ENCODE measurements at regions of chr16 and their contacts with region 1.

Region 1: DNA sequence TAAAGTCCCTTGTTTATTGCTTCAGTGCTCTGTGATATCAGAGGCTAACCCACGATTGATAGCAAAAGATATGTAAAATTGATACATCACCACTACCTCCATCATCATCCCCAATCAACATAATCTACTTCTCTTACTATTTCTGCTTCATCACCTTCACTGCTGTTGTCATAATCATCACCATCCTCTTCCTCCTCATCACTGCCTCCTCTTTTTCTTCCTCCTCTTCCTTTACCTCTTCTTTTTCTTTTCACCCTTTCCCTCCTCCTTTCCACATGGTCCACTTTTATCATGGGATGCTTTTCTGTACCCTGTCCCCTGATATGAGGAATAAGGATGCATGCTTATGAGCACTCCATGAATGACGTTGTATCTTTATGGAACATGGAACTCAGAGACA is 178.6 kb upstream of the ZKSCAN2 start:
- DNase-seq: no peak
- H3K4me3 ChIP-seq: no peak overlapping the region
- H3K27ac ChIP-seq: no peak overlapping the region
- H3K4me1 ChIP-seq: no peaks in the 10 kb centered on the region
- CTCF ChIP-seq: no peak

Region 2: GRCh38 chr16:25855818-25856217 is 419.6 kb after region 1 on chr16:
- CTCF ChIA-PET with region 1: no interaction called
- POLR2A ChIA-PET with region 1: no interaction called
- intact Hi-C with region 1: no loop called
- DNase-seq: no peak
- H3K4me3 ChIP-seq: no peak overlapping the region
- H3K27ac ChIP-seq: no peak overlapping the region
- H3K4me1 ChIP-seq: no peaks in the 10 kb centered on the region
- CTCF ChIP-seq: no peak

Region 3: GRCh38 chr16:26594666-26595065 is 1158.4 kb after region 1 on chr16:
- CTCF ChIA-PET with region 1: no interaction called
- POLR2A ChIA-PET with region 1: no interaction called
- intact Hi-C with region 1: loop called (anchors 5 kb)
- DNase-seq: no peak
- H3K4me3 ChIP-seq: no peak overlapping the region
- H3K27ac ChIP-seq: no peak overlapping the region
- H3K4me1 ChIP-seq: no peaks in the 10 kb centered on the region
- CTCF ChIP-seq: no peak

Measured in OCI-LY7 (cell line).